ENCODE measurements at regions of chr9 and their contacts with region 1.

Region 1: GRCh38 chr9:136283291-136284235 is 20.3 kb downstream of the CCDC187 start:
- DNase-seq: peak; percentile 42 to 83 (median 65)
- ATAC-seq: peak; percentile 96
- H3K4me3 ChIP-seq: no peak overlapping the region
- H3K4me3 Mint-ChIP-seq: no peak overlapping the region
- H3K27ac ChIP-seq: no peak overlapping the region
- H3K27ac Mint-ChIP-seq: no peak overlapping the region
- H3K4me1 ChIP-seq: peaks cover 9% of the 10 kb centered on the region
- H3K4me1 Mint-ChIP-seq: peaks cover 5% of the 10 kb centered on the region
- H3K27me3 ChIP-seq: no peaks in the 10 kb centered on the region
- H3K27me3 Mint-ChIP-seq: peaks cover 5% of the 10 kb centered on the region
- CTCF ChIP-seq: peak; percentile 82

Region 2: GRCh38 chr9:135602789-135603481 is 680.6 kb before region 1 on chr9:
- CTCF ChIA-PET with region 1: no interaction called
- POLR2A ChIA-PET with region 1: no interaction called
- intact Hi-C with region 1: loop called in 1 of 2 experiments (anchors 10 kb)
- DNase-seq: peak; percentile 22 to 70 (median 45)
- ATAC-seq: no peak
- H3K4me3 ChIP-seq: no peak overlapping the region
- H3K4me3 Mint-ChIP-seq: no peak overlapping the region
- H3K27ac ChIP-seq: no peak overlapping the region
- H3K27ac Mint-ChIP-seq: no peak overlapping the region
- H3K4me1 ChIP-seq: peaks cover 5% of the 10 kb centered on the region
- H3K4me1 Mint-ChIP-seq: no peaks in the 10 kb centered on the region
- H3K27me3 ChIP-seq: peaks cover 0 to 6% of the 10 kb centered on the region in 2 experiments
- H3K27me3 Mint-ChIP-seq: peaks cover 27% of the 10 kb centered on the region
- CTCF ChIP-seq: peak; percentile 77

Region 3: DNA sequence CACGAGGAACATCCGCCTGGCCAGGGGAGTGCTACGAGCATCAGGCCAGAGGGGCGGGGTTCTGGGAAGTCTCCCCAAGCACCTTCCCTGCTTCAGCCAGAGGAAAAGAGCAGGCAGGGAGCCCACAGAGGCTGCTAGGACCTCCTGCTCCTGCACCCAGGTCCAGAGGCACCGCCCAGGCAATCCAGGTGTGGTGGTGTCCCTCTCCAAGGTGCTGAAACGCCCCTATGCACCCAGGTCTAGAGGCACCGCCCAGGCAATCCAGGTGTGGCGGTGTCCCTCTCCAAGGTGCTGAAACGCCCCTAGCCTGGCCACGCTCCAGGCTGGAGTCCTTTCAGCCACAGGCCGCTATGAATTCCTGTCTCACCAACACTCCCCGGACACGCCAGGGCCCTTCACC is 311.7 kb before region 1 on chr9:
- CTCF ChIA-PET with region 1: no interaction called
- POLR2A ChIA-PET with region 1: interaction called, 3 read pairs
- intact Hi-C with region 1: loop called in 1 of 2 experiments (anchors 5 kb)
- DNase-seq: peak in 11 of 14 experiments; percentile 31 to 83 (median 42)
- ATAC-seq: peak; percentile 70
- H3K4me3 ChIP-seq: no peak overlapping the region
- H3K4me3 Mint-ChIP-seq: no peak overlapping the region
- H3K27ac ChIP-seq: no peak overlapping the region
- H3K27ac Mint-ChIP-seq: no peak overlapping the region
- H3K4me1 ChIP-seq: peaks cover 20% of the 10 kb centered on the region
- H3K4me1 Mint-ChIP-seq: peaks cover 8% of the 10 kb centered on the region
- H3K27me3 ChIP-seq: no peaks in the 10 kb centered on the region
- H3K27me3 Mint-ChIP-seq: peaks cover 4% of the 10 kb centered on the region
- CTCF ChIP-seq: no peak

Region 4: GRCh38 chr9:136133191-136133958 is 150.2 kb before region 1 on chr9:
- CTCF ChIA-PET with region 1: no interaction called
- POLR2A ChIA-PET with region 1: no interaction called
- intact Hi-C with region 1: loop called in 1 of 2 experiments (anchors 1 kb)
- DNase-seq: peak in 4 of 14 experiments; percentile 20 to 60 (median 42)
- ATAC-seq: peak; percentile 74
- H3K4me3 ChIP-seq: peak overlapping the region; percentile 22
- H3K4me3 Mint-ChIP-seq: peak overlapping the region; percentile 58
- H3K27ac ChIP-seq: no peak overlapping the region
- H3K27ac Mint-ChIP-seq: no peak overlapping the region
- H3K4me1 ChIP-seq: peaks cover 8% of the 10 kb centered on the region
- H3K4me1 Mint-ChIP-seq: peaks cover 6% of the 10 kb centered on the region
- H3K27me3 ChIP-seq: peaks cover 35 to 42% of the 10 kb centered on the region in 2 experiments
- H3K27me3 Mint-ChIP-seq: peaks cover 50% of the 10 kb centered on the region
- CTCF ChIP-seq: no peak

Region 5: DNA sequence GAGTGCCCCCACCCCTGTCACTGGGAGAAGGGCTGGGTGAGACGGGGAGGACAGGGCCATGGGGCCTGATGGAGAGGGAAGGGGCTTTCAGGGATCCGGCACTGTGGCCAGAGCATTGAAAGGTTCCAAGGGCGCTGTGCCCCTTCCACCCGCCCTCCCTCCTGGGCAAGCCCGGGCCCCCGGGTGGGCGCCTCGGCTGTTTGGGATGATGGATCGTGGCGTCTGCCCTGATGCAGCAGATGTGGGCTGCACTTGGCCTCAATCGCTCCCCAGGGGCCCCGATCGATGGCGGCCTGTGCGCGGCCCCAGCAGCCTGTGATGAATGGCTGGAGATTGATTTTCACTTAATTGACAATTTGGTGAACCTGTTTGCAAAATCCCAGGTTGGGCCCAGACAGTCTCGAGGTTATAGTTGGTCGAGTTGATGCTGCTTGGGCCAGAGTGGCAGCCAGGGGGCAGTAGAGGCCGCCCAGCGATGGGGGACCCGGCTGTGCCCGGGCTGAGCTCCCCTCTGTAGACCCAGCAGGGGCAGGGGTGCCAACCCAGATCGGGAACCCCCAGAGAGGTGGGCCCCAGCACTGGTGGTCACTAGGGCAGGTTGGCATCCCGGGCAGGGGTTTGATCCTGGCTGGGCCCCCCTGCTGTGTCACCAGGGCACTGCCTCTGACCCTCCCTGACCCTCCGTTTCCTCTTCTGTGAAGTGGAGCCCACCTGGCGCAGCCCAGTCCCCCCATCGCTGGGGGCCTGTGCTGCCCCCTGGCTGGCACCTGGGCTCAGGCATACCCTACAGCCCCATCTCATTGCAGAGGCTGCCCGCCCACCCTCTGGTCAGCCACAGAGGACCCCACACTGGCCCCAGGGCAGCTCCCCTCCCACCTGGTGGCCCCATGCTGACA is 113.3 kb before region 1 on chr9:
- CTCF ChIA-PET with region 1: no interaction called
- POLR2A ChIA-PET with region 1: no interaction called
- intact Hi-C with region 1: loop called in 1 of 2 experiments (anchors 1 kb)
- DNase-seq: peak; percentile 26 to 63 (median 42)
- ATAC-seq: peak; percentile 51
- H3K4me3 ChIP-seq: no peak overlapping the region
- H3K4me3 Mint-ChIP-seq: no peak overlapping the region
- H3K27ac ChIP-seq: no peak overlapping the region
- H3K27ac Mint-ChIP-seq: no peak overlapping the region
- H3K4me1 ChIP-seq: no peaks in the 10 kb centered on the region
- H3K4me1 Mint-ChIP-seq: no peaks in the 10 kb centered on the region
- H3K27me3 ChIP-seq: peaks cover 0 to 10% of the 10 kb centered on the region in 2 experiments
- H3K27me3 Mint-ChIP-seq: peaks cover 22% of the 10 kb centered on the region
- CTCF ChIP-seq: peak; percentile 36